Mammary epithelial cell (primary cell): ENCODE measurements at regions of chr11 and their contacts with region 1.

Region 1: DNA sequence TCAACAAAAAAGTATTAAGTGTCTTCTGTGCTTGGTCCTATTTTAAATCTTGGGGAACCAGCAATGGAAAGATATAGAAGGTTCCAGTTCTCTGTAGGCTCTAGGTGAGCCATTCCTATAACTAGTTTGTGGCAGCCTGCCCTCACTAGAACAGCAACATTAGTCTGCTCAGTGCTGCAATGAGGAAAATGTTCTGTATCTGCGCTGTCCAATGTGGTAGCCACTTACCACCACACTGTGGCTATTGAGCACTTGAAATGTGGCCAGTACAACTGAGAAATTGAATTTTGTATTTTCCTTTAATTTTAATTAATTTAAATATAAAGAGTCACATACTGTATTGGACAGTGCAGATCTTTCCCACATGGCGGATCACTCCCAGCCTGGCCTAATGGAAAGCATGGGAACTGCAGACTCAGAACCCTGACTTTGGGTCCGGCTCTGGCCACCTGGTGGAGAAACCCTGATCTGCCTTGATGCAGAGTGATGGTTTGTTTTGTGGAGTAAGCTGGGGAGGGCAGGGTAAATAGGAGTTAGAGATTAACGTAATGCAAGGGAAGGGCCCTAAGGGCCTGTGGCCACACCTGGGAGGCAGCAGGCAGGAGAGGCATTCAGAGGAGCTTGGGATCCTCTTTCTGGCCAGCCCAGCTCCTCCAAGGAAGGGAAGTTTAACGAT is 101.0 kb downstream of the ME3 start:
- DNase-seq: no peak
- H3K4me3 ChIP-seq: no peak overlapping the region
- H3K27ac ChIP-seq: no peak overlapping the region
- H3K4me1 ChIP-seq: peaks cover 8% of the 10 kb centered on the region
- H3K27me3 ChIP-seq: no peaks in the 10 kb centered on the region
- CTCF ChIP-seq: peak; percentile 49 to 61

Region 2: GRCh38 chr11:86523738-86524619 is 47.4 kb before region 1 on chr11:
- CTCF ChIA-PET with region 1: no interaction called
- dilution Hi-C with region 1: no loop called
- in situ Hi-C with region 1: no loop called
- intact Hi-C with region 1: loop called (anchors 5 kb)
- DNase-seq: peak; percentile 87
- H3K4me3 ChIP-seq: no peak overlapping the region
- H3K27ac ChIP-seq: peak overlapping the region; percentile 77
- H3K4me1 ChIP-seq: peaks cover 22% of the 10 kb centered on the region
- H3K27me3 ChIP-seq: no peaks in the 10 kb centered on the region
- CTCF ChIP-seq: no peak

Region 3: GRCh38 chr11:87583931-87584330 is 1012.5 kb after region 1 on chr11:
- CTCF ChIA-PET with region 1: no interaction called
- dilution Hi-C with region 1: no loop called
- in situ Hi-C with region 1: no loop called
- intact Hi-C with region 1: loop called (anchors 10 kb)
- DNase-seq: peak; percentile 85
- H3K4me3 ChIP-seq: no peak overlapping the region
- H3K27ac ChIP-seq: peak overlapping the region; percentile 61
- H3K4me1 ChIP-seq: peaks cover 16% of the 10 kb centered on the region
- H3K27me3 ChIP-seq: no peaks in the 10 kb centered on the region
- CTCF ChIP-seq: no peak